Lower leg skin (tissue), 4 donors: ENCODE measurements at regions of chr6 and their contacts with region 1.

Region 1: GRCh38 chr6:110815217-110816109 is at the start of gene CDK19:
- DNase-seq: peak; percentile 98 to 100
- H3K4me3 ChIP-seq: peak within 1 kb of the TSS; percentile 79
- CTCF ChIP-seq: no peak
- POLR2A ChIP-seq: peak in 1 of 2 donors; percentile 26
- total RNA-seq, gene CDK19: 17.0 to 19.1 (median 18.7) TPM

Region 2: GRCh38 chr6:110873981-110874879 is 58.8 kb after region 1 on chr6 and contains the start of gene AMD1:
- intact Hi-C with region 1: loop called (anchors 10 kb)
- DNase-seq: peak; percentile 97 to 99
- H3K4me3 ChIP-seq: peak within 1 kb of the TSS; percentile 96
- CTCF ChIP-seq: no peak
- POLR2A ChIP-seq: peak in 1 of 2 donors; percentile 93
- total RNA-seq, gene AMD1: 36.3 to 49.8 (median 40.4) TPM